ENCODE measurements at regions of chr21 and their contacts with region 1.

Region 1: GRCh38 chr21:33199516-33200217 is 30.1 kb upstream of the IFNAR2 start:
- DNase-seq: peak in 2 of 3 donors; percentile 69 to 81
- ATAC-seq: peak; percentile 80 to 81
- H3K4me3 ChIP-seq: no peak overlapping the region
- H3K27ac ChIP-seq: peak overlapping the region; percentile 86
- H3K4me1 ChIP-seq: peaks cover 5% of the 10 kb centered on the region
- H3K27me3 ChIP-seq: no peaks in the 10 kb centered on the region

Region 2: DNA sequence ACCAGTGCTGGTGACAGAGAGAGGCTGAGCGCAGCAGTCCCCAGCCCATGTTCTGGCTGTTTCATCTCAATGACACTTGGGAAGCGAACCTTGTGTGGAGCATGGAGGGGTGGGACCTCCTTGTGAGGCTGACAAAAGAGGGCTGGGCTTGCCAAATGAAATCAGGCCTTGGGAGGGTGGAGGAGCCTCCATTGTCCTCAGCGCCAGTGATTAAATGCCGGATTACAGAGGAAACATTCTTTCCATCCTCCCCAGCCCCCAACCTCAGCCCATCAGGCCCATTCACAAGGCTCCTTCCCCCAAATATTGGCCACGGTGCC is 364.8 kb before region 1 on chr21:
- intact Hi-C with region 1: loop called in 1 of 4 experiments (anchors 5 kb)
- DNase-seq: no peak
- ATAC-seq: no peak
- H3K4me3 ChIP-seq: no peak overlapping the region
- H3K27ac ChIP-seq: no peak overlapping the region
- H3K4me1 ChIP-seq: no peaks in the 10 kb centered on the region
- H3K27me3 ChIP-seq: no peaks in the 10 kb centered on the region

Region 3: DNA sequence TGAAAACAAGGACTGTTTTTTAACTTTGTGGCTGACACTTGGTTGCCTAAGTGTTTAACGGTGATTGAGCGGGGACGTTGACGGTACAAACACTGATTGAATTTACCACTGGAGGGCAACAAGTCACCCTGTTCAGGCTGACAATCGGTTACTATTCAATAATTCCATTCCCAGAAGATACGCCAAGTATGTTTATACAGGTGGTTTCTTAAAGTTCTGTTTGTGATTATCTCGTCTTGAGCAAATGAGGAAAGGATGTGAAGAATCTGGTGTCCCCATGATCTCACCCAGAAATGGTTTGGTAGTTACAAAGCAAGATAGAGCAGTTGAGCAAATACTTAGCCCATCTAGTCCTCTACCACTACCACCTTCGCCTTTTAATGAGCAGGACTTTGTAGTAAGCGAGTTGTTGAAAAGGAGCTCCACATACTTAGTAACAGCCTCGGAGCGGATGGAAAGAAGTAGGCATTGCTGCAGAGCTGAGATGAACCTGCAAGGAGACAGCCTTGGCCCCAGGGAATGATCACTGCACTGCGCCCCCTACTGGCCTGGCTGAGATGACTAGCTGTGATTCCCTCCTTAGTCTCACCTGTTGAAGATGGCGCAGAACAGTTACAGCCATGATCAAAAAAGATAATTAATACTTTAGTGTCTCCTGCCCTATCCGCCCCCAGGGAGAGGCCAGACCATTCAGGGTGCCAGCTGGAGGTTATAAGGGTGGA is 161.4 kb after region 1 on chr21:
- intact Hi-C with region 1: loop called in 1 of 4 experiments (anchors 5 kb)
- DNase-seq: peak; percentile 70 to 87 (median 85)
- ATAC-seq: peak; percentile 82 to 83
- H3K4me3 ChIP-seq: peak overlapping the region; percentile 54
- H3K27ac ChIP-seq: peak overlapping the region; percentile 75
- H3K4me1 ChIP-seq: peaks cover 3% of the 10 kb centered on the region
- H3K27me3 ChIP-seq: no peaks in the 10 kb centered on the region

Region 4: DNA sequence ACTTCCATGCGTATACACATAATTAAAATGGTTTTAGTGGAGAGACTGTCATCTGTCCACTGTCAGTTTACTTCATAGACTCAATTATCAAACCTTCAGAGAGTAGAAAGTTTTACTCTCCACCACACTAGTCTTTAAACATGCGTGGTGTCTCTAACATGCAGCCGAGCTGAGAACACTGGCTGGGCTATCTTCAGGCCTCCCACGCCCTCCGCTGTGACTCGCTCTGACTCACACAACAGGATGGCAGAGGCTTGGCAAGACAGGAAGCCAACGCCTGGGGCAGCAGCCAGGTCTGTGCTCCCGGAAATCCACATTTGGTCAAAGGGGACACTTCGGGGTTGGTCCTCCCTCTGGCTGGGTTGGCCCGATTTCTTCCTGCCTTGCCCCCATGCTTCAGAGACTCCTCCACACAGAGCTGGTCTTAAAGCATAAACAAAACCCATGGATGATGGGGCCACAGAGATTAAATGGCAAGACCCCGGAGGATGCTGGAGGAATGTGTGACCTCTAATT is 180.9 kb after region 1 on chr21:
- intact Hi-C with region 1: loop called in 3 of 4 experiments (anchors 5 to 10 kb)
- DNase-seq: peak; percentile 94 to 96 (median 96)
- ATAC-seq: peak; percentile 97 to 98
- H3K4me3 ChIP-seq: no peak overlapping the region
- H3K27ac ChIP-seq: peak overlapping the region; percentile 60
- H3K4me1 ChIP-seq: peaks cover 16% of the 10 kb centered on the region
- H3K27me3 ChIP-seq: no peaks in the 10 kb centered on the region

Region 5: GRCh38 chr21:33441489-33442477 is 242.1 kb after region 1 on chr21:
- intact Hi-C with region 1: loop called (anchors 2 to 10 kb)
- DNase-seq: peak in 2 of 3 donors; percentile 66 to 70
- ATAC-seq: peak; percentile 71 to 79
- H3K4me3 ChIP-seq: no peak overlapping the region
- H3K27ac ChIP-seq: peak overlapping the region; percentile 38
- H3K4me1 ChIP-seq: no peaks in the 10 kb centered on the region
- H3K27me3 ChIP-seq: no peaks in the 10 kb centered on the region

Region 6: DNA sequence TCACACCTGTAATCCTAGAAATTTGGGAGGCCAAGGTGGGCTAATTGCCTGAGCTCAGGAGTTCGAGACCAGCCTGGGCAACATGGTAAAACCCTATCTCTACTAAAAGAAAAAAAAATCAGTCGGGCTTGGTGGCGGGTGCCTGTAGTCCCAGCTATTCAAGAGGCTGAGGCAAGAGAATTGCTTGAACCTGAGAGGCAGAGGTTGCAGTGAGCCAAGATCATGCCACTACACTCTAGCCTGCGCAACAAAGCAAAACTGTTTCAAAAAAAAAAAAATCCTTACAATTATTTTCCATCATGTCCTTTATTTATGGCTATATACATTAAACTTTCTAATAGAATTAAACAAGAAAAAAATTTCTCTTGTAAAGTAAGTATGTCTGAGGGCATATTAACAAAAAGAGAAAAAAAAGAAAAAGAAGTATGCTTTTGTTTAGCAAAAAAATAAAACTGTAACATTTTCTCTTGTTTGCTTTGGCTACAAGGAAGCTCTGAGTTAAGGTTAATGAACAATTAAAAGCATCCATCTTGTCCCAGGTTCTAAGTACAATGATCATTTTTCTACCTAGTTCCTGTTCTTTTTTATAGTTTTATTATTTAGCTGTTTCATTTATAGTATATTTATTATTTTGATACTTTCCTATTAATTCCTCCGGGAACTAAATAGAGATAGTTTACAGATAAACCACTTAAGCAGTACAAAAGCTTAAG is 262.0 kb after region 1 on chr21:
- intact Hi-C with region 1: no loop called
- DNase-seq: no peak
- ATAC-seq: no peak
- H3K4me3 ChIP-seq: no peak overlapping the region
- H3K27ac ChIP-seq: no peak overlapping the region
- H3K4me1 ChIP-seq: no peaks in the 10 kb centered on the region
- H3K27me3 ChIP-seq: no peaks in the 10 kb centered on the region

Region 7: DNA sequence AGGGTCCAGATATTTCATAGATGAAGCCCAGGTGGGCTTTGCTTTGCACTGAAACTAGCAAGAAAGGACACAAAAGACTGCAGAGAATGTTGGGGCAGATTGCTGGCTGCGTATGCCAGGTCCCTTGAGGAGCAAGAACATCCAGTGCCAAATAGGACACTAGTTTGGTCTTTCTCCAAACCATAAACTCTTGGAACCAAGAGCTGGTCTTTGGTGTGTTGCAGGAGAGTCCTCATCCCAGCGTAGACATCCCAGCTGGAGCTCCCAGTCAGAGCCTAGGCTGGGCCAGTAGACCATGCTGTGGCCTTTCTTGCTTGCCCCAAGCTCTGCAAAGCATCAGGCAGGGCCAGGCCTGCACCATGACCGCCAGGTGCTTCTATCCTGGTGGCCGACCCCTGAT is 628.4 kb after region 1 on chr21:
- intact Hi-C with region 1: no loop called
- DNase-seq: peak; percentile 56 to 76 (median 68)
- ATAC-seq: peak; percentile 83 to 87
- H3K4me3 ChIP-seq: no peak overlapping the region
- H3K27ac ChIP-seq: no peak overlapping the region
- H3K4me1 ChIP-seq: peaks cover 4% of the 10 kb centered on the region
- H3K27me3 ChIP-seq: no peaks in the 10 kb centered on the region

Measured in right cardiac atrium (tissue), 5 donors.